Ovary (tissue), 10 donors: ENCODE measurements at regions of chr9 and their contacts with region 1.

Region 1: DNA sequence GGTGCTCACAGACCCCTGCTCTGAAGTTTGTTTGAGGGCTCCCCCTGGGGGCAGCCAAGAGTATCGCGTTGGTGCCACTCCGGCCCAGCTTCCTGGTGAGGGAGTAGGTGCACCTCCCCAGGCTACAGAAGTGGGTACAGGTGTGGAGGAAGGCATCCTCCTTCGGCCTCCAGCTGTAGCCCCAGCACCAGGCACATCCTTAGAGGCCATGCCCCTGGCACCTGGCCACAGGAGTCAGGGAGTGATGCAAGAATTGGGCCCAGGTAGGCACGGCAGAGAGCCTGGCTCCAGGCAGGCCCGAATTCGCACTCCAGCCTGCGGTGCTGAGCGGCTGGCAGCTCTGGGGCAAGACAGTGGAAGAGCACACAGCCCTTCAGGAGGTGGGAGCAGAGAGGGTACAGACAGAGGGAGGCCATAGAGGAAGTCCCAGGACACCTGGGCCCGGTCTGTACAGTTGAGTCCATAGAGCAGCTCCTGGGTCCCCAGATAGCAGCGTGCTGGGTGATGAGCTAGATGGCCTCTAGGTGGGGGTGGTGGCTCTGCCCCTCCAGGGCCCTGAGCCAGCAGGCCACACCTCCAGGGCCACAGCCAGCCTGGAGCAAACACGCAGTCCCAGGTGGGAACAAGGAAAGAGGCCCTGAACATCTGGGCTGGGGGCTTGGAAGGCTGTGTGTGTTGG is 2.4 kb downstream of the SAPCD2 start:
- DNase-seq: peak; percentile 59 to 84 (median 77)
- H3K4me3 ChIP-seq: no peak overlapping the region
- H3K27ac ChIP-seq: no peak overlapping the region
- H3K4me1 ChIP-seq: no peaks in the 10 kb centered on the region
- H3K27me3 ChIP-seq: peaks cover 4% of the 10 kb centered on the region
- CTCF ChIP-seq: peak; percentile 35 to 80 (median 79)
- EP300 ChIP-seq: no peak
- POLR2A ChIP-seq: no peak

Region 2: GRCh38 chr9:137029058-137029936 is 38.7 kb before region 1 on chr9:
- intact Hi-C with region 1: loop called in 1 of 4 experiments (anchors 5 kb)
- DNase-seq: peak; percentile 53 to 80 (median 74)
- H3K4me3 ChIP-seq: peak overlapping the region; percentile 53
- H3K27ac ChIP-seq: no peak overlapping the region
- H3K4me1 ChIP-seq: peaks cover 3% of the 10 kb centered on the region
- H3K27me3 ChIP-seq: no peaks in the 10 kb centered on the region
- CTCF ChIP-seq: peak; percentile 63 to 70 (median 63)
- EP300 ChIP-seq: no peak
- POLR2A ChIP-seq: no peak

Region 3: DNA sequence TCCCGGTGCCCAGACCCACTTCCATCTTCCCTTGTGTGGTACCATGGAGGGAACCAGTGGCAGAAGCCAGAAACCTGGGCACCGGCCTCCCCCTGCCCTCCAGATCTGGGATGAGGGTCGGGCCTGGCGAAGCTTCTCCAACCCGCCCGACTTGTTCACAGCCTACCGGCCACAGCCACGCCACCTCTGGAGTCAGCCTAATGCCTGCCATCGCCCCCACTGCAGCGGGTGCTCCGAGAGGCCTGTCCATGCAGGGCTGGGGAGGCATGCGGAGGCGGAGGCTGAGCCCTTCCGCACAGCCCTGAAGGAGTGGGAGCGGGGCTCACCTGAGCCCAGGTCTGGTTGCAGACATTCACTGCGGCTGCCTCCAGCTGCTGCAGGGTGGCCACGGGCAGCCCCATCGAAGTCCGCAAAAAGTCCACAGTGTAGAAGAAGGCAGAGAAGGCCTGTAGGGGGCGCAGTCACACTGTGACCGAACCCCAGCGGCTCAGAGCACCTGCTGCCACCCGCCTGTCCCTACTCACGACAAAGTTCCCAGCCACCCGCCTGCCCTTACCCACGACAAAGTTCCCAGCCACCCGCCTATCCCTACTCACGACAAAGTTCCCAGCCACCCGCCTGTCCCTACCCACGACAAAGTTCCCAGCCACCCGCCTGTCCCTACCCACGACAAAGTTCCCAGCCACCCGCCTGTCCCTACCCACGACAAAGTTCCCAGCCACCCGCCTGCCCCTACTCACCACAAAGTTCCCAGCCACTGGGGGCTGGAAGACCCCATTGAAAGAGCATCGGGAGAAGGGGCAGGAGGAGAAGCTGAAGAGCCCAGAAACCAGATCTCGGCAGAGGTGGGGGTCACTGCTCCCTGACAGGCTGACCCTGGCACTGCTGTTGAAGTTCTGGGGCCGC is 18.2 kb before region 1 on chr9:
- intact Hi-C with region 1: loop called in 1 of 4 experiments (anchors 2 kb)
- DNase-seq: peak in 3 of 5 donors; percentile 58 to 71 (median 58)
- H3K4me3 ChIP-seq: no peak overlapping the region
- H3K27ac ChIP-seq: no peak overlapping the region
- H3K4me1 ChIP-seq: peaks cover 19% of the 10 kb centered on the region
- H3K27me3 ChIP-seq: peaks cover 6% of the 10 kb centered on the region
- CTCF ChIP-seq: peak in 1 of 3 donors; percentile 22
- EP300 ChIP-seq: no peak
- POLR2A ChIP-seq: no peak

Region 4: DNA sequence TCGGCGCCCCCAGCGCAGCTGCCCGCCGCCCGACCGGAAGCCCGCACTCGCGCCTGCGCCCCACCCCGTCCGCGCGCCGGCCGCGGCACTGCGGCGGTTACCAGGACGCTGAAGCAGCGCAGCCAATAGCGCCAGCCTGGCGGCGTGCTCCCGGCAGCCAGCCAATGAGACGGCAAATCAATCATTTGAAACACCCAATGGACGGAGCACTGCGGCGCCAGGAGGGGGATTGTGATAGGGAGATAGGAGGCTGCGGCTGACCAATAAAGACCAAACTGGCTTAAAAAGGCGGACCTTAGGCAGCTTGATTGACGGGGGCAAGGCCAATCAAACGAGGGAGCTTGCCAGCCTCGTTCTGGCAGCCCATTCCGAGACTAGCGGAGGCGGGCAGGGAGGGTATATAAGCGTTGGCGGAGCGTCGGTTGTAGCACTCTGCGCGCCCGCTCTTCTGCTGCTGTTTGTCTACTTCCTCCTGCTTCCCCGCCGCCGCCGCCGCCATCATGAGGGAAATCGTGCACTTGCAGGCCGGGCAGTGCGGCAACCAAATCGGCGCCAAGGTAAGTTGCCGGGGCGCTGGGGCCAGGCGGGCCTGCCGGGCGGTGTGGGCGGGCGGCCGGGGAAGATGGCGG is 173.0 kb after region 1 on chr9 and contains the start of gene TUBB4B:
- intact Hi-C with region 1: no loop called
- DNase-seq: peak; percentile 99 to 100 (median 100)
- H3K4me3 ChIP-seq: peak within 1 kb of the TSS; percentile 64
- H3K27ac ChIP-seq: peak within 1 kb of the TSS; percentile 63 to 95
- H3K4me1 ChIP-seq: peaks cover 12% of the 10 kb centered on the region
- H3K27me3 ChIP-seq: no peaks in the 10 kb centered on the region
- CTCF ChIP-seq: peak in 1 of 3 donors; percentile 6
- EP300 ChIP-seq: no peak
- POLR2A ChIP-seq: peak; percentile 100
- total RNA-seq, gene TUBB4B: 88.0 to 234 (median 175) TPM

Region 5: DNA sequence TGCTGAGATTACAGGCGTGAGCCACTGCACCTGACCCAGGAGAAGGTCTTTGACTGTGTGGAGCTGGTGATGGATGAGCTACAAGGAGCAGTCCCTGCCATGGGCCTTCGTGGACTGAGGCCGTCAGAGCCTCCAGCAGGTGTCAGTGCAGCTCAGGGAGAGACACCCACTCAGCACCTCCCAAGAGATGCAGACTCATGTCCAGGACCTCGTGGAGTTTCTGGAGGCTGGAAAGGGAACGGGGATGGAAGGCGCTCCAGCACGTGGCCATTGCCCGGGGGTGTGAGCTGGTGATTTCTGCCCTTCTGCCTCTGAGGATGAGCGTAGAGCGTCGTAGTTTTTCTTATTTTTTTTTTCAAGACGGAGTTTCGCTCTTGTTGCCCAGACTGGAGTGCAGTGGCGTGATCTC is 219.0 kb after region 1 on chr9:
- intact Hi-C with region 1: no loop called
- DNase-seq: peak in 4 of 5 donors; percentile 25 to 40 (median 28)
- H3K4me3 ChIP-seq: no peak overlapping the region
- H3K27ac ChIP-seq: no peak overlapping the region
- H3K4me1 ChIP-seq: no peaks in the 10 kb centered on the region
- H3K27me3 ChIP-seq: no peaks in the 10 kb centered on the region
- CTCF ChIP-seq: no peak
- EP300 ChIP-seq: no peak
- POLR2A ChIP-seq: no peak